ENCODE measurements at regions of chr2 and their contacts with region 1.

Region 1: GRCh38 chr2:203909261-203909967 is 27.1 kb upstream of the ICOS start:
- DNase-seq: peak in 1 of 2 experiments; percentile 53
- H3K4me3 ChIP-seq: no peak overlapping the region
- H3K4me3 Mint-ChIP-seq: peak overlapping the region; percentile 9
- H3K27ac Mint-ChIP-seq: no peak overlapping the region
- H3K4me1 ChIP-seq: peaks cover 14% of the 10 kb centered on the region
- H3K4me1 Mint-ChIP-seq: peaks cover 14% of the 10 kb centered on the region
- H3K27me3 ChIP-seq: no peaks in the 10 kb centered on the region
- H3K27me3 Mint-ChIP-seq: no peaks in the 10 kb centered on the region
- CTCF ChIP-seq: peak; percentile 79 to 80

Region 2: GRCh38 chr2:202588647-202589581 is 1320.5 kb before region 1 on chr2:
- CTCF ChIA-PET with region 1: no interaction called
- POLR2A ChIA-PET with region 1: interaction called, 3 read pairs
- intact Hi-C with region 1: loop called (anchors 1 kb)
- DNase-seq: peak; percentile 81 to 86
- H3K4me3 ChIP-seq: no peak overlapping the region
- H3K4me3 Mint-ChIP-seq: peak overlapping the region; percentile 40
- H3K27ac Mint-ChIP-seq: no peak overlapping the region
- H3K4me1 ChIP-seq: peaks cover 11% of the 10 kb centered on the region
- H3K4me1 Mint-ChIP-seq: peaks cover 9% of the 10 kb centered on the region
- H3K27me3 ChIP-seq: no peaks in the 10 kb centered on the region
- H3K27me3 Mint-ChIP-seq: no peaks in the 10 kb centered on the region
- CTCF ChIP-seq: peak; percentile 85 to 86

Region 3: GRCh38 chr2:203225423-203226039 is 683.9 kb before region 1 on chr2:
- CTCF ChIA-PET with region 1: no interaction called
- POLR2A ChIA-PET with region 1: no interaction called
- intact Hi-C with region 1: loop called (anchors 5 kb)
- DNase-seq: peak; percentile 43 to 51
- H3K4me3 ChIP-seq: no peak overlapping the region
- H3K4me3 Mint-ChIP-seq: no peak overlapping the region
- H3K27ac Mint-ChIP-seq: no peak overlapping the region
- H3K4me1 ChIP-seq: no peaks in the 10 kb centered on the region
- H3K4me1 Mint-ChIP-seq: no peaks in the 10 kb centered on the region
- H3K27me3 ChIP-seq: no peaks in the 10 kb centered on the region
- H3K27me3 Mint-ChIP-seq: no peaks in the 10 kb centered on the region
- CTCF ChIP-seq: peak; percentile 76 to 78

Region 4: GRCh38 chr2:203484266-203485112 is 424.9 kb before region 1 on chr2:
- CTCF ChIA-PET with region 1: no interaction called
- POLR2A ChIA-PET with region 1: no interaction called
- intact Hi-C with region 1: loop called (anchors 1 kb)
- DNase-seq: peak; percentile 39 to 41
- H3K4me3 ChIP-seq: no peak overlapping the region
- H3K4me3 Mint-ChIP-seq: no peak overlapping the region
- H3K27ac Mint-ChIP-seq: no peak overlapping the region
- H3K4me1 ChIP-seq: no peaks in the 10 kb centered on the region
- H3K4me1 Mint-ChIP-seq: no peaks in the 10 kb centered on the region
- H3K27me3 ChIP-seq: no peaks in the 10 kb centered on the region
- H3K27me3 Mint-ChIP-seq: no peaks in the 10 kb centered on the region
- CTCF ChIP-seq: peak; percentile 41 to 75